Posterior vena cava (tissue), 2 donors: ENCODE measurements at regions of chr1 and their contacts with region 1.

Region 1: GRCh38 chr1:113369699-113370098 is 20.6 kb upstream of the MAGI3 start:
- DNase-seq: no peak

Region 2: GRCh38 chr1:112263453-112263852 is 1106.2 kb before region 1 on chr1:
- intact Hi-C with region 1: loop called in 1 of 2 experiments (anchors 5 kb)
- DNase-seq: no peak